ENCODE measurements at regions of chr1 and their contacts with region 1.

Region 1: DNA sequence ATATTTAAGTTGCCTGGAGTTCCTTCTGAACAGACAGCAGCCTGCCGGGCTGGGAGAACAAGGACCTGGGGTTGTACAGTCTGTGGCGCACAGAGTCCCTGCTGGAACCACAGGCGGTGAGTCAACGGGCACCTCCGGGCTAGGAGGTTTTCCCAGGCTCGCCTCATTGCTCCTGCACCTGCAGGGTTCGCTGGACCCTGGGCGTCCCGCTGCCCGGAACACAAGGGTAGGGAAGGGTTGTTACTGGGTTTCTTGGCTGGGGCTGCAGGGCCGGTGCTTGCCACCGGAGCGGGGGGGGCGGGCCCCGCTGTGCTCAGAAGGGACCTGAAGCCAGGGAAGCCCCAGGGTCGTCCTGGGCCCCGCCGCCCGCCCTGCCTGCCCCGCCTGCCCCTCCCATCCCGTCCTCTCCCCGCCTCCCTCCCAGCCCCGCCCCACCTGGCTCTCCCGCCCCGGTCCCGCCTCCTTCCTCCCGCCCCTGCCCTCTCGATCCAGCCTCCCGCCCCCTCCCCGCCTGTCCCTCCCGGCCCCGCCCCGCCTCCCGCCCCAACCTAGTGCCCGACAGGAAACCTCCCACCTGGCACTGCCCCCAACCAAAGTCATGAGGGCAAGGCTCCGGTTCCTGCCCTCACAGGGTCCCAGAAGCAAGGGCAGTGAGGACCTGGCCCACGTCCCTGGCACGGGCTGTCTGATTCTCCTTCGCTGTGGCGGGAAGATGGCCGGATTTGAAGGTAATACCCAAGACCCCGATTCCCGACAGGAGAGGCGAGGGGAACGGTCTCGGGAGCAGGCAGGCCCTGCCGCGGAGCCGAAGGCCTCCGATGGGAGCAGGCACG is 6.8 kb downstream of the JMJD4 start:
- DNase-seq: peak; percentile 44
- H3K4me3 ChIP-seq: peak overlapping the region in 1 of 3 experiments; percentile 30
- H3K27ac ChIP-seq: no peak overlapping the region
- H3K4me1 ChIP-seq: peaks cover 2% of the 10 kb centered on the region
- H3K27me3 ChIP-seq: peaks cover 0 to 10% of the 10 kb centered on the region in 2 experiments
- CTCF ChIP-seq: no peak
- POLR2A ChIP-seq: no peak

Region 2: GRCh38 chr1:227388214-227389173 is 339.8 kb before region 1 on chr1:
- CTCF ChIA-PET with region 1: no interaction called
- POLR2A ChIA-PET with region 1: no interaction called
- dilution Hi-C with region 1: no loop called
- intact Hi-C with region 1: no loop called
- DNase-seq: no peak
- H3K4me3 ChIP-seq: no peak overlapping the region
- H3K27ac ChIP-seq: no peak overlapping the region
- H3K4me1 ChIP-seq: no peaks in the 10 kb centered on the region
- H3K27me3 ChIP-seq: no peaks in the 10 kb centered on the region
- CTCF ChIP-seq: no peak
- POLR2A ChIP-seq: no peak

Region 3: DNA sequence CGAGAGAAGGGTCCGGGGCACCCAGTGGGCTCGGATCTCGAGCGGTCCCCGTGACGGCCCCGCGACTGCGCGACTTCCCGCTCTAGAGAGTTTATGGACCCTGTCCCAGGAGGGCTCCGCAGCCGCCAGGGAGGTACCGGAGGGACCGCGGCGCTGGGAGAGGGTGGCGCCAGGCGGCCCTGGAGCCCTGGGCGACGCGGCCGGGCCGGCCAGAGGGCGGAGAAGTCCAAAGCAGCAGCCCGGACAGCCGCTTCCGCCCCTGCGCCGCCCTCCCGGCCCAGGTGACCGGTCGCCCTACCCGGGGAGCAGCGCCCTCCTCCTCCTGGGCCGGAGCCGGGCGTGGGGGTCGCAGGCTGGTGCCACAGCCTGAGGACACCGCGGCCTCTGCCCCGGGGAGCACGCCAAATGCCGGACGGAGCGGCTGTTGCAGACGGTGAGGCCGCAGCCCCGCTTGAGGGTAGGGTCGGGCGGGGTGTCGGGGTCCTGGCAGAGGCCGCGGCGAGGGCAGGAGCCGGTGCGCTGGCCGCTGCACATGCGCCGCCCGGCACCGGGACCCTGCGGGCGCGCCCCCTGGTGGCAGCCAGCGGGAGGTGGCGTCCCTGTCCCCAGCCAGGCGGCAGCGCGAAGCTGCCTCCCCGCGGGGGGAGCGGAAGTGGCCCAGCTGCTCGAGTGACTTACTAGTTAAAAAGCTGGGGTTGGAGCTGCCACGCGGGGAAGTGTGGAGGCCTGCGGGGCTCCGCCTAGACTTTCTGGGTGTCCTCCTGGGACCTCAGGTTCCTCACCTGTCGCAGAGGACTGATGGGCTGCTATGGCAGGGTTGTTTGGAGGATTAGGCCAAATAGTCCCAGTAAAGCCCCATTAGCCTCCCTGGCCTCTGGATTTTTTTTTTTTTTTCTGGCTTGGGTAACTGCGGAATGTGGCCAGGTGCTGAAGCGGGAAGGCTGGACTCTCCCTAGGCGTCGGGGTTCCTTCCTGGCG is 185.8 kb before region 1 on chr1:
- CTCF ChIA-PET with region 1: no interaction called
- POLR2A ChIA-PET with region 1: no interaction called
- dilution Hi-C with region 1: no loop called
- intact Hi-C with region 1: loop called (anchors 5 kb)
- DNase-seq: peak; percentile 70
- H3K4me3 ChIP-seq: peak overlapping the region; percentile 2 to 64 (median 23)
- H3K27ac ChIP-seq: no peak overlapping the region
- H3K4me1 ChIP-seq: peaks cover 8% of the 10 kb centered on the region
- H3K27me3 ChIP-seq: no peaks in the 10 kb centered on the region
- CTCF ChIP-seq: peak; percentile 87 to 96
- POLR2A ChIP-seq: no peak

Region 4: DNA sequence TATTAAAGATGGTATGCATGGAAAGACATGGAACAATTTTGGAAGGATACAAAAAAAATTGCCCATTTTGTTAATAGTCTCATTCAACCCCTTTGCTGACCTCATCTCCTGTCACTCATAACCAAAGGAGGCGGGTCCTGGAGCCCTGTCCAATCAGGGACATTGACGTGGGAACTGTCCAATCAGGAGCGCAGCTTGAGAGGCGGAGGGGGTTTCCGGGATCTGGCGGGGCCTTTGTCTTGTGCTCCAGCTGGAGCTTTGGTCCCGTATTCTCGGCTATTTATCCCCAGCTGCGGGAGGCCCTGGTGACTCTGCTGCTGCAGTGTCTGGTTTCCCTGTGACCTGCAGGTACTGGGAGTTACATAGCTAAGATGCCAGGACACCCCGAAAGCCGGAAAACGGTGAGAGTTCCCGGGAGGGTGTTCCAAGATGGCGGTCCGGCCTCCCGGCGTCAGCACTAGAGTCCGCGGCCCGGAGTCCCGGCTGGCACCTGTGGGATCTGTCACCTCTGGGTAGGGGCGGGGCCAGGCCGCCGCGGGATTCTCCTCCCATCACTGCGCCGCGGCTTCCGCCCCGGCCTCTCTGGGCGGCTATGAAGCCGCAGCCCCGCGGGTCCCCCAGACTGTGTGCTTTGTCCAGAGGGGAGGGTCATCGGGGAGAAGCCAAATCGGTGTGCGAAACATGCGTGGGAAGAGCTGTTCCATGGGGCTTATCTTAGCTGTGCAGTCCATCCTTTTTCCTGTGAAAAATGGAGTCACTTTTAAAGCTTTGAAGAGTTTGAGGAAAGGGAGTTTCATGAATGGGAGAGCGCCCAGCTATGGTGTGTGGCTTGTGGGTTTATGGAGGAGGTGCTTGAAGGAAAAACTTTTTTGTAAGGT is 164.7 kb before region 1 on chr1 and contains the start of gene ZNF678:
- CTCF ChIA-PET with region 1: no interaction called
- POLR2A ChIA-PET with region 1: no interaction called
- dilution Hi-C with region 1: no loop called
- intact Hi-C with region 1: loop called (anchors 1 kb)
- DNase-seq: peak; percentile 94
- H3K4me3 ChIP-seq: peak within 1 kb of the TSS; percentile 70 to 90 (median 90)
- H3K27ac ChIP-seq: peak within 1 kb of the TSS; percentile 94
- H3K4me1 ChIP-seq: peaks cover 5% of the 10 kb centered on the region
- H3K27me3 ChIP-seq: peaks cover 19 to 27% of the 10 kb centered on the region in 2 experiments
- CTCF ChIP-seq: no peak
- POLR2A ChIP-seq: peak; percentile 55
- total RNA-seq, gene ZNF678: 7.5 and 7.7 TPM in 2 replicates

Region 5: GRCh38 chr1:227952374-227953021 is 224.2 kb after region 1 on chr1:
- CTCF ChIA-PET with region 1: interaction called, 13 read pairs
- POLR2A ChIA-PET with region 1: no interaction called
- dilution Hi-C with region 1: no loop called
- intact Hi-C with region 1: no loop called
- DNase-seq: no peak
- H3K4me3 ChIP-seq: no peak overlapping the region
- H3K27ac ChIP-seq: no peak overlapping the region
- H3K4me1 ChIP-seq: peaks cover 3% of the 10 kb centered on the region
- H3K27me3 ChIP-seq: peaks cover 5 to 17% of the 10 kb centered on the region in 2 experiments
- CTCF ChIP-seq: no peak
- POLR2A ChIP-seq: no peak

Measured in endothelial cell of umbilical vein (primary cell).